ENCODE measurements at regions of chr1 and their contacts with region 1.

Region 1: GRCh38 chr1:26102526-26102925 is 9.1 kb upstream of the PDIK1L start:
- DNase-seq: no peak
- H3K4me3 ChIP-seq: no peak overlapping the region
- H3K27ac ChIP-seq: no peak overlapping the region
- H3K4me1 ChIP-seq: peaks cover 0 to 8% (median 0%) of the 10 kb centered on the region in 3 donors
- H3K27me3 ChIP-seq: peaks cover 0 to 6% (median 0%) of the 10 kb centered on the region in 4 donors
- CTCF ChIP-seq: no peak
- POLR2A ChIP-seq: no peak

Region 2: DNA sequence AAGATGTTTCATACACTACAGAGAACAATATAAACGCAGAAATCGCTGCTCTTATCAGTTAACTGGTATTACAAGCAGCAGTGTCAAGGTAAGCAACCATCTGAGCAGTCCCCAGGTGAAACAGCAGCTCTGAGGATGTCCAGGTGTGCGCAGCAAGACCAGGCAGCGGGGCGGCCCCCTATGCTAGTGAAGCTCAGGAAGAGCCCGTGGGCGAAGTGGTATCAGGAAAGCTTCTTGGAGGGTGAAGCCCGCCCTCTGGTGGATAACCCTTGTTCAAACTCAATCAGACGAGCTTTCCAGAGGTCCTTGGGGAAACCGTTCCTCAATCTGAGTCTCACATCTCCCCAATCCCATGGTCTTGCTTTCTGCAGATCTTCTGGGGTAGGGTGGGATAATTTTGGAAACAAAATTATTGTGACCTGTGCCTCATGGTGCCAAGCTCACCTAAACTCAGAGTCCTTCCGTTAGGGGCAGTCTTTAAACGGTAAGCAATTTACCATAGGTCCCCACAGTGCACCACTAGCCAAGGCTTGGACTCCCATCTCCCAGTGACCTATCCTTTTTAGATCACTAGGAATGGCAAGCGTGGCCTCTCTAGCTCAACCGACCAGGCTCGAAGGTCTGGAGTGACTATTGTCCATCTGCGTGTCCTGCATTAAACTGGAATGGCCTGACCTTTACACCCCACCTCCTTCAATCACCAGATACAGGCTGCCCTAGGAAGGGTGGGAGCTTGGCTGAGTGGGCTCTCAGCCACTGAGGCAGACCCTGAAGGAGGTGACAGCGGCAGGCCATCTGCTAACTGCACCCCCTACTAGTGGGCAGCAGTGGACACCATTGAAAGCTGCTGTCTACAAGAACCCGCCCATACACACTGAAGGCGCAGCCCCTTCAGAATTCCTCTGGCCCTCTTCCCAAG is 42.8 kb after region 1 on chr1:
- intact Hi-C with region 1: loop called (anchors 2 kb)
- DNase-seq: no peak
- H3K4me3 ChIP-seq: no peak overlapping the region
- H3K27ac ChIP-seq: no peak overlapping the region
- H3K4me1 ChIP-seq: peaks cover 0 to 14% (median 6%) of the 10 kb centered on the region in 3 donors
- H3K27me3 ChIP-seq: peaks cover 0 to 12% (median 0%) of the 10 kb centered on the region in 4 donors
- CTCF ChIP-seq: peak; percentile 73 to 90 (median 83)
- POLR2A ChIP-seq: no peak

Measured in esophagus squamous epithelium (tissue), 5 donors.